Psoas muscle (tissue), 8 donors: ENCODE measurements at regions of chr2 and their contacts with region 1.

Region 1: GRCh38 chr2:224847961-224848850 is 132.0 kb upstream of the CCDC195 start:
- DNase-seq: no peak
- ATAC-seq: peak; percentile 54 to 72 (median 60)
- H3K4me3 ChIP-seq: no peak overlapping the region
- H3K27ac ChIP-seq: no peak overlapping the region
- H3K4me1 ChIP-seq: no peaks in the 10 kb centered on the region
- H3K27me3 ChIP-seq: no peaks in the 10 kb centered on the region
- CTCF ChIP-seq: no peak

Region 2: GRCh38 chr2:224401641-224402342 is 446.4 kb before region 1 on chr2 and contains the start of gene FAM124B:
- intact Hi-C with region 1: no loop called
- DNase-seq: peak; percentile 50 to 80
- ATAC-seq: peak; percentile 56 to 80 (median 78)
- H3K4me3 ChIP-seq: peak within 1 kb of the TSS; percentile 54
- H3K27ac ChIP-seq: peak within 1 kb of the TSS; percentile 43
- H3K4me1 ChIP-seq: no peaks in the 10 kb centered on the region
- H3K27me3 ChIP-seq: no peaks in the 10 kb centered on the region
- CTCF ChIP-seq: no peak
- total RNA-seq, gene FAM124B: 1.5 to 2.5 (median 2.1) TPM

Region 3: GRCh38 chr2:224871813-224872212 is 23.6 kb after region 1 on chr2:
- intact Hi-C with region 1: loop called in 1 of 2 experiments (anchors 2 kb)
- DNase-seq: no peak
- ATAC-seq: no peak
- H3K4me3 ChIP-seq: no peak overlapping the region
- H3K27ac ChIP-seq: no peak overlapping the region
- H3K4me1 ChIP-seq: no peaks in the 10 kb centered on the region
- H3K27me3 ChIP-seq: no peaks in the 10 kb centered on the region
- CTCF ChIP-seq: no peak